Activated T-helper 1 cell treated with anti-CD3 and anti-CD28 coated beads, Interleukin-12 subunit alpha, Interleukin-12 subunit beta, Interleukin-2, Interleukin-4 antibody, amounts not matched to agents 30 ng/mL and 10 ng/mL and 1 ng/mL, durations not matched to agents 14 hours and 24 hours and 36 hours (primary cell): ENCODE measurements at regions of chr12 and their contacts with region 1.

Region 1: GRCh38 chr12:70242695-70243509 is at the start of gene CNOT2:
- DNase-seq: peak; percentile 85
- H3K4me3 Mint-ChIP-seq: peak within 1 kb of the TSS; percentile 99
- H3K27ac Mint-ChIP-seq: peak within 1 kb of the TSS; percentile 99
- H3K4me1 Mint-ChIP-seq: peaks cover 61% of the 10 kb centered on the region
- H3K27me3 Mint-ChIP-seq: no peaks in the 10 kb centered on the region
- total RNA-seq, gene CNOT2: 69.0 and 73.2 TPM in 2 replicates

Region 2: GRCh38 chr12:69359531-69360347 is 883.2 kb before region 1 on chr12 and contains the start of gene YEATS4:
- intact Hi-C with region 1: loop called (anchors 2 kb)
- DNase-seq: peak; percentile 88
- H3K4me3 Mint-ChIP-seq: peak within 1 kb of the TSS; percentile 94
- H3K27ac Mint-ChIP-seq: peak within 1 kb of the TSS; percentile 89
- H3K4me1 Mint-ChIP-seq: peaks cover 33% of the 10 kb centered on the region
- H3K27me3 Mint-ChIP-seq: peaks cover 3% of the 10 kb centered on the region
- total RNA-seq, gene YEATS4: 45.2 and 47.2 TPM in 2 replicates

Region 3: DNA sequence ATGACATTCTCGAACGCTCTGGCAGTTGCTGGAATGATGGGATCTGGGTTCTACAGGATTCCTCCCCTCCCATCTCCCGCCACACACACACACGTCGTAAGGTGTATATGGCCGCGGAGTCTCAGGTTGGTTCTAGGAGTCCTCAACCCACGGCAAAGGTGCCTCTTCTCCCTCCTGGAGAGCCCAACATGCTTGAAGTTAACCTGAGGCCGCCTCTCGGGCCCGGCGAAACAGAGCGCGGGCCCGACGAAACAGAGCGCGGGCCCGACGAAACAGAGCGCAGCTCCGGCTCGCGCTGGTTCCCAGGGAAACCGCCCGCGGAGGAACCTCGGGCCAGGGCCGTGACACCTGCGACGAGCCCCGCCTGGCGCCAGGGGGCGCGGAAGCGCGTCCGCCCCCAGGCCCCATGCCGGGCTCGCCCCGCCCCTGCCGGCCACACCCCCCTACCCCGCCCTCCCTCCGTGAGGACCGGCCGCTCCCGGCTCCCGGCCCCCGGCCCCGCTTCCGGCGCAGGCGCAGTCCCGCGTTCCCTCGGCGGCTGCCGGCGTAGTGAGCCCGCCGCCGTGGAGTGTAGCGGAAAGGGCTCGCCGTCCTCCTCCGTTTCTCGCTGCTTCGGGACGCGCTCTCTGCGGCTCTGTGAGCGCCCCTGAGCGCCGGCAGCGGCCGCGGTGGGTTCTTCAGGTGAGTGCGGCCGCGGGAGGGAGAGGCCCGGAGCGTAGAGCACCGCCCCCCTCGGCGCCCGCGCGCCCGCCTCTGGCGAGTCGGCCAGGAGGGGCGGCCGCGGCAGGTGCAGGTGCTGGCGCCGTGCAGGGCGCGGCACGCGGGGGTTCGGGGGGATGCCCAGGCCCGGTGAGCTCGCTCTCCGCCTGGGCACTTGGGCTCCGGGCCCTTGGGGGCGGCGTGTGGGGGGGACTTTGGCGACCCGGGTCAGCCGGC is 504.3 kb before region 1 on chr12 and contains the start of gene RAB3IP:
- intact Hi-C with region 1: loop called (anchors 2 kb)
- DNase-seq: peak; percentile 88
- H3K4me3 Mint-ChIP-seq: peak within 1 kb of the TSS; percentile 95
- H3K27ac Mint-ChIP-seq: peak within 1 kb of the TSS; percentile 92
- H3K4me1 Mint-ChIP-seq: peaks cover 31% of the 10 kb centered on the region
- H3K27me3 Mint-ChIP-seq: peaks cover 36% of the 10 kb centered on the region
- total RNA-seq, gene RAB3IP: 29.8 and 36.1 TPM in 2 replicates

Region 4: GRCh38 chr12:70305794-70306193 is 62.9 kb after region 1 on chr12:
- intact Hi-C with region 1: loop called (anchors 5 kb)
- DNase-seq: no peak
- H3K4me3 Mint-ChIP-seq: no peak overlapping the region
- H3K27ac Mint-ChIP-seq: no peak overlapping the region
- H3K4me1 Mint-ChIP-seq: peaks cover 28% of the 10 kb centered on the region
- H3K27me3 Mint-ChIP-seq: no peaks in the 10 kb centered on the region

Region 5: DNA sequence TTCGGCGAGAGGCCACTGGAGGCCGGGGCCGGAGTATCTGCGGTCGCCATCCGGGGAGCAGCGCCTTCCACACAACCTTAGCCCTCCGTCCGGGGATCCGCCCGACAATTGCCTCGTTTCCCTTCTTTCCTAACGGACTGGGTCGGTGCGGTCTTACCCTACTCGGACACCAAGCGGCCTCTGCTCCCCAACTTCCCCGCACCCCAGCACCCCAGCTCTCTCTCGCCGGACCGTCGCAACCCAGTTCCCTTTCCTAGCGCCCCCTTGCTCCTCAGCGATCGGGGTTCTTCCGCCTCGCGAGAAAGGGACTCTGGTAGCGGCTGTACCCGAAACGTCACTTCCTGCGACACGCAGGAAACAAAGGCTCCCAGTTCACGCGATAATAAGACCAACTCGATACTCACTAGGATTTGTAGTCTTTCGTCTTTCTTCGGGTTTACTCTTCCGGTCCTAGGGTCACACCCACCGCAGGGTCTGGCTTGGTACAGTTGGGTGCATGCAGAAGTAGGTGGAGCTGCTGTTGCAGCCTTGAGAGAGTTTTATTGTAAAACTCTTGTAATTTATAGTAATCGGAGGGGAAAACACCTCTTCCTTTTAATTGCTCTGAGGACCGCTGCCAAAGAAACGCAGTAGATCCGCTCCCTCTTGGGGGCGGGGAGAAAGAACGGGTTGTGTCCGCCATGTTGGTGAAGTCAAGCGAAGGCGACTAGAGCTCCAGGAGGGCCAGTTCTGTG is 1420.8 kb after region 1 on chr12 and contains the start of gene ZFC3H1:
- intact Hi-C with region 1: loop called (anchors 1 kb)
- DNase-seq: peak; percentile 90
- H3K4me3 Mint-ChIP-seq: peak within 1 kb of the TSS; percentile 97
- H3K27ac Mint-ChIP-seq: peak within 1 kb of the TSS; percentile 99
- H3K4me1 Mint-ChIP-seq: peaks cover 44% of the 10 kb centered on the region
- H3K27me3 Mint-ChIP-seq: no peaks in the 10 kb centered on the region
- total RNA-seq, gene ZFC3H1: 57.7 and 58.6 TPM in 2 replicates

Region 6: GRCh38 chr12:71754461-71755145 is 1511.7 kb after region 1 on chr12 and contains the start of gene RAB21:
- intact Hi-C with region 1: loop called (anchors 2 kb)
- DNase-seq: peak; percentile 97
- H3K4me3 Mint-ChIP-seq: peak within 1 kb of the TSS; percentile 93
- H3K27ac Mint-ChIP-seq: peak within 1 kb of the TSS; percentile 97
- H3K4me1 Mint-ChIP-seq: peaks cover 22% of the 10 kb centered on the region
- H3K27me3 Mint-ChIP-seq: peaks cover 27% of the 10 kb centered on the region
- total RNA-seq, gene RAB21: 100 and 105 TPM in 2 replicates